Body of pancreas (tissue), 4 donors: ENCODE measurements at regions of chr12 and their contacts with region 1.

Region 1: DNA sequence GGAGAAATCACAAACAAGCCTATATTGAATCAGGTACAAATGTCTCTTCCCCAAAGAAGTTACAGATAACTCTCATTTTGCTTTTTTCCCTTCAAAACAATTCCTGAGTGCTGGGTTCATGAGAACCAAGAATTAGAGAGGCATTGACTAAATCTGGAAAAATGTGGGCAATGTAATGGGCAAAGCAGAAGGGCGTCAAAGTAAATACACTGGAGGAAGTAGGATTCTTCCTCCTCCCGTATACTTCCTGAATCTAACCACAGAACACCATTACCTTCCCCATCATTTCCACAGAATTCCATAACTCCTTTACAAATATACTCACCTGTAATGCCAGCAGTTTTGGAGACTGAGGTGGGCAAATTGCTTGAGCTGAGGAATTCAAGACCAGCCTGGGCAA is 3.0 kb upstream of the RBMS2 start:
- DNase-seq: no peak
- ATAC-seq: no peak
- H3K4me3 ChIP-seq: no peak overlapping the region
- H3K27ac ChIP-seq: no peak overlapping the region
- H3K4me1 ChIP-seq: peaks cover 13% of the 10 kb centered on the region
- H3K27me3 ChIP-seq: no peaks in the 10 kb centered on the region
- CTCF ChIP-seq: no peak
- POLR2A ChIP-seq: no peak

Region 2: GRCh38 chr12:55982319-55982936 is 536.1 kb before region 1 on chr12:
- intact Hi-C with region 1: no loop called
- DNase-seq: no peak
- ATAC-seq: no peak
- H3K4me3 ChIP-seq: no peak overlapping the region
- H3K27ac ChIP-seq: no peak overlapping the region
- H3K4me1 ChIP-seq: no peaks in the 10 kb centered on the region
- H3K27me3 ChIP-seq: no peaks in the 10 kb centered on the region
- CTCF ChIP-seq: no peak
- POLR2A ChIP-seq: no peak

Region 3: DNA sequence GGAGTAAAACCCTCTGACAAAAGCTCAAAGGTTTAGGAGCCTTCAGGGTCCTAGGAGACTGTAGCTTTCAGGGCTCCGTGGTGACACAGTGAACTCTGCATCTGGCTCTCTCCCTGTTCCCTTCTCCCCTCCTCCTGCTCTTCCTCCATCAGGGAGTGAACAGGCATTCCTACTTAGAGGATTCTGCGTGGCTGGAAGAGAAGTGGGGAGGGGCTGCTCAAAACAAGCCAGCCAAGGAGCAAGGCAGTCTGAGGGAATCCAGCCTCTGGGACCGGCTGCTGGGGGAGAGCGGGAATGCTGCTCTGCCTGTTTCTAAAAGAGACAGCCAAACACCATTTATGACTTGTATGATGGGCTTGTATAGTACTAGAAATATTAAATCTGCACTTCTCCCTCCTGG is 52.6 kb after region 1 on chr12:
- intact Hi-C with region 1: loop called (anchors 5 kb)
- DNase-seq: no peak
- ATAC-seq: no peak
- H3K4me3 ChIP-seq: no peak overlapping the region
- H3K27ac ChIP-seq: peak overlapping the region in 1 of 4 donors; percentile 42
- H3K4me1 ChIP-seq: no peaks in the 10 kb centered on the region
- H3K27me3 ChIP-seq: no peaks in the 10 kb centered on the region
- CTCF ChIP-seq: no peak
- POLR2A ChIP-seq: no peak